WTC11 (cell line): ENCODE measurements at regions of chr22 and their contacts with region 1.

Region 1: DNA sequence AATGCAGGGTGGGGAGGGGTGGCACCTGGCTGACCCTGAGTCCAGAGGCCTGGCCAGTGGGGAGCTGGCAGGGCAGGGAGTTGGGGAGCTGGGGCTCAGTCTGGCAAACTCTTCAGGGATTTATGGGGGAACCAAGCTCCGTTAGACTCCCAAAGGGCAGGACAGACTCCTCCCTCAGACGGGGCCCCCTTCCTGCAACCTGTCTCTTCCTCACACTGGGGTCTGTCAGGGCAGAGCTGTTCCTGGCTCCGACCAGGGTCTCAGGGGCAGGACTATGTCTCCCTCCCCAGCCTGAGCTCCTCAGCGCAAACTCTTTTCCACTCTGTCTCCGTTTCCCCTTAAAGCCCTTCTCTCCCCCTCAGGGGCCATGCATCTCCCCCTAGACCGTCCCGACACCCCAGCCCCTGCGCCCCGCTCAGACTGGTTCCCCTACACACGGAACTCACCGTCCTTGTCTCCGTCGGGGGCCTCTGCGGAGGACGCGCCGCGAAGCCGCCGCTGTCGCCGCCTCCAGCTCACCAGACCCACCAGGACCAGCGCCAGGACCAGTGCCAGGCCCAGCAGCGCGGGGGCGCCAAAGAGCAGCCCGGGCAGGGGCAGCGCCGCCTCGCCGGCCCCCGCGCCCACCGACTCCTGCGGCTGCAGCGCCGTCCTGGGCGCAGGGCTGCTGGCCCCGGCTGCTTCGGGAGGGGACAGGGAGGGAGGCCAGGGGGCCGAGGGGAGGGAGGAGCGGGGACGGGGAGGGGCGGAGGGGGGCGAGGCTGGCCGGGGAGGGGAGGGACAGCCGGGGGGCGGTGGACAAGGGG is 748 bp downstream of the TNFRSF13C start:
- DNase-seq: peak; percentile 91
- ATAC-seq: peak; percentile 80
- H3K4me3 Mint-ChIP-seq: peak overlapping the region; percentile 67
- H3K27ac Mint-ChIP-seq: no peak overlapping the region
- H3K4me1 Mint-ChIP-seq: peaks cover 16% of the 10 kb centered on the region
- H3K27me3 Mint-ChIP-seq: peaks cover 87% of the 10 kb centered on the region
- CTCF ChIP-seq: peak; percentile 85

Region 2: DNA sequence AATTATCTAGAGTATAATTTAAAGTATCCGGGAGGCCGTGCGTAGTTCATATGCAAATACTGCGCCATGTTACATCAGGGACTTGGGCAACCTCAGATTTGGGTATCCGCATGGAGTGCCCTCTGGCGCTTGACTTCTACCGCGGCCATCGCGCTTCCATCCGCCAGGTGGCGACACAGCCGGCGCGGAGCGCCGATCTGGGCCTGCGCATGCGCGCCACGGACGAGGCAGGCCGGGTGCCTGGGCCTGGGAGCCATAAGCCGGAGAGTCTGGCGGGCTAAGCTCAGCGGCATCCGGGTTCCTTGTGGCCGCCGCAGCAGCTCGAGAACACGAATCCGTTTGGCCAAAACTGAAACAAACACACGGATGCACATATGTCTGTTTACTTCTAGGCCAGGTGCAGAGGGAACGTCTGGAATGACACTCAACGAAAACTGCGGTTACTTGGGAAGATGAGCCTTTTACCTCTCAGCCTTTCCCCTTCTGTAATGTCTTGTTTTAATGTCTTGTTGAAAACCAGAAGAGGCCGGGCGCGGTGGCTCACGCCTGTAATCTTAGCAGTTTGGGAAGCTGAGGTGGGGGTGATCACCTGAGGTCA is 259.1 kb before region 1 on chr22:
- CTCF ChIA-PET with region 1: interaction called, 16 read pairs
- POLR2A ChIA-PET with region 1: no interaction called
- DNase-seq: peak; percentile 92
- ATAC-seq: peak; percentile 86
- H3K4me3 Mint-ChIP-seq: peak overlapping the region; percentile 60
- H3K27ac Mint-ChIP-seq: peak overlapping the region; percentile 98
- H3K4me1 Mint-ChIP-seq: peaks cover 12% of the 10 kb centered on the region
- H3K27me3 Mint-ChIP-seq: no peaks in the 10 kb centered on the region
- CTCF ChIP-seq: peak; percentile 87

Region 3: GRCh38 chr22:41910050-41911000 is 15.5 kb before region 1 on chr22:
- CTCF ChIA-PET with region 1: interaction called, 66 read pairs
- POLR2A ChIA-PET with region 1: interaction called, 4 read pairs
- DNase-seq: peak; percentile 69
- ATAC-seq: peak; percentile 27
- H3K4me3 Mint-ChIP-seq: no peak overlapping the region
- H3K27ac Mint-ChIP-seq: no peak overlapping the region
- H3K4me1 Mint-ChIP-seq: peaks cover 17% of the 10 kb centered on the region
- H3K27me3 Mint-ChIP-seq: peaks cover 57% of the 10 kb centered on the region
- CTCF ChIP-seq: no peak

Region 4: GRCh38 chr22:41946629-41947423 is 21.0 kb after region 1 on chr22 and contains the start of gene CENPM:
- CTCF ChIA-PET with region 1: interaction called, 143 read pairs
- POLR2A ChIA-PET with region 1: interaction called, 6 read pairs
- DNase-seq: peak; percentile 95
- ATAC-seq: peak; percentile 93
- H3K4me3 Mint-ChIP-seq: peak within 1 kb of the TSS; percentile 73
- H3K27ac Mint-ChIP-seq: peak within 1 kb of the TSS; percentile 49; the same call in 1 of the 2 replicates
- H3K4me1 Mint-ChIP-seq: peaks cover 46% of the 10 kb centered on the region
- H3K27me3 Mint-ChIP-seq: peaks cover 4% of the 10 kb centered on the region; the same call in 1 of the 2 replicates
- CTCF ChIP-seq: no peak
- total RNA-seq, gene CENPM: 40.3 to 43.7 TPM (median 41.7 TPM) in 3 replicates

Region 5: GRCh38 chr22:42050641-42051180 is 124.9 kb after region 1 on chr22:
- CTCF ChIA-PET with region 1: no interaction called
- POLR2A ChIA-PET with region 1: no interaction called
- DNase-seq: no peak
- ATAC-seq: no peak
- H3K4me3 Mint-ChIP-seq: no peak overlapping the region
- H3K27ac Mint-ChIP-seq: no peak overlapping the region
- H3K4me1 Mint-ChIP-seq: no peaks in the 10 kb centered on the region
- H3K27me3 Mint-ChIP-seq: no peaks in the 10 kb centered on the region; the same call in 1 of the 2 replicates
- CTCF ChIP-seq: no peak

Region 6: GRCh38 chr22:42090596-42091454 is 165.0 kb after region 1 on chr22 and contains the start of gene NDUFA6:
- CTCF ChIA-PET with region 1: interaction called, 13 read pairs
- POLR2A ChIA-PET with region 1: no interaction called
- DNase-seq: peak; percentile 98
- ATAC-seq: peak; percentile 97
- H3K4me3 Mint-ChIP-seq: peak within 1 kb of the TSS; percentile 97
- H3K27ac Mint-ChIP-seq: peak within 1 kb of the TSS; percentile 99
- H3K4me1 Mint-ChIP-seq: peaks cover 12% of the 10 kb centered on the region; the same call in 1 of the 2 replicates
- H3K27me3 Mint-ChIP-seq: peaks cover under 1% of the 10 kb centered on the region; the same call in 1 of the 2 replicates
- CTCF ChIP-seq: peak; percentile 58; the same call in 1 of the 2 replicates
- total RNA-seq, gene NDUFA6: 84.6 to 90.8 TPM (median 85.9 TPM) in 3 replicates

Region 7: DNA sequence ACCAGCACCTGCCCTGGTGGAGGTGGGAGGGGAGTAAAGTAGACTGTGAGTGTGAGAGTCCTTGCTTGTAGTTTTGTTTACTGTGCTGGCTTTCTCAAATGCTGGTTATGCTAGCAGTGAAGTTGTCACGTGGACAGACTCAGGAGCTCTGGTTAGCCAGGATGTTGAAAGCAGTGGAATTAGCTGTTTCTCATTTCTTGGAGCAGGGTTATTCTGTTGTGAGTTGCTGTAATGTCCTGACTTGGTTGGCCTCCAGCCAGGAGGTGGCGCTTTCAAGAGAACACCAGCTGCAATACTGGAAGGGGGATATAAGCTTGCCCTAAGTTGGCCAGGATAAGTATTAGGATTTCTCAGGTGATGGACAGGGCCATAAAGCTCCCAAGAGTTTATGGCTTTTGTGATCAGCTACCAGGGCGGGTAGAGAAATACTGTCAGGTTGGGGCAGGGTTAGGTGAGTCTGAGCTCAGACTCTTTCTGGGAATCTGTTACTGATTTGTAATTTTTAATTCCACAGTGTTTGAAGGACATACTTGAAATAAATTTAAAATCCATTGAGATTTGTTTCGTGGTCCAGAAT is 191.1 kb after region 1 on chr22:
- CTCF ChIA-PET with region 1: interaction called, 21 read pairs
- POLR2A ChIA-PET with region 1: no interaction called
- DNase-seq: peak; percentile 62
- ATAC-seq: peak; percentile 72
- H3K4me3 Mint-ChIP-seq: no peak overlapping the region
- H3K27ac Mint-ChIP-seq: no peak overlapping the region
- H3K4me1 Mint-ChIP-seq: peaks cover 11% of the 10 kb centered on the region
- H3K27me3 Mint-ChIP-seq: peaks cover 31% of the 10 kb centered on the region
- CTCF ChIP-seq: no peak